Naive thymus-derived CD8-positive, alpha-beta T cell (primary cell): ENCODE measurements at regions of chr9 and their contacts with region 1.

Region 1: GRCh38 chr9:21802195-21803000 is at the start of gene MTAP:
- DNase-seq: peak; percentile 44 to 81 (median 64)
- ATAC-seq: peak; percentile 75 to 81
- H3K4me3 Mint-ChIP-seq: peak within 1 kb of the TSS; percentile 97 to 100 (median 98)
- H3K27ac Mint-ChIP-seq: peak within 1 kb of the TSS; percentile 86 to 100 (median 96)
- H3K4me1 Mint-ChIP-seq: peaks cover 26 to 52% (median 45%) of the 10 kb centered on the region in 4 donors
- H3K27me3 Mint-ChIP-seq: peaks cover 0 to 9% (median 2%) of the 10 kb centered on the region in 5 donors
- polyA plus RNA-seq, gene MTAP: 11.2 to 20.2 (median 14.2) TPM

Region 2: DNA sequence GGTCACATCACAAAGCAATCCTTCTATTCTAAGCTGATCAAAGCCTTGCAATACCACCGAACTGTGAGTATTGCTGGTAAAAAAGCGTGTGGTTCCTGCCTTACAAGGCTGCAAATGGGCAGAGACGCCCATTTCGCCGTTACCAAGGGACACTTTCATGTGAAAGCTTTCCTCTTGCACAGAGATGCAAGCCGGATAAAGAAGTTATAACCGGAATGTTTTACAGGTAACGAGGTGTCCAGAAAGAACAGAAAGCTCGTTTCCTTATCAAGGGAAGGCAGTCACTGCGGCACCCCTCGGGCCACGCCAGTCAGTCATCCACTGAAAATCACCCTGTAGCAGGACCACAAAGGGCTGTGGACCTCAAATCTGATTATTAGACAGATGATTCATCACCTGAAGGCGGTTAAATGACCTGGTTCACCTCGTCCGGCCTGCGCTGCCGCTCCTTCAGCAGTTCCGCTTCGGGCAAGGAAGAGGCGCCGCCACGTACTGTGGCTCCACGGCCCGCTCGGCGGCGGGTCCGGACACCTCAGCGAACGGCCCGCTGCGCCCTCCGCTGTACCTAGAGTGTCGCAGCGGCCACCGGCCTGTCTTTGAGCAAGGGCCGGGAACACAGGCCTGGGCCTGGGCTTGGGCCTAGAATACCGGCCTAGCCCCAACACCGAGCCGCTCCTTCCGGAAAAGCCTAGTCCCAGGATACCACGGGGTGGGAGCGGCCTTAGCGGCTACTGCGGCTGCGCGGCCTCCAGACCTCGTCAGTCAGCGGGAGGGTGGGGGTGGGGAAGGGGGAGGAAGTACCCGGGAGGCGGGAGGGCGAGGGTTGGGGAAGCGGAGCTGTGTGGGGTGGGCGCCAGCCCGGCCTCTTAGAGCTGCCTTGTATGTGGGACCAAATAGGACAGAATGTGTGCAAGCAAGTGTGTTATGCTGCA is 467.4 kb before region 1 on chr9 and contains the start of gene KLHL9:
- POLR2A ChIA-PET with region 1: interaction called, 13 read pairs
- DNase-seq: peak; percentile 78 to 93 (median 84)
- ATAC-seq: peak; percentile 84 to 85
- H3K4me3 Mint-ChIP-seq: peak within 1 kb of the TSS; percentile 88 to 98 (median 94)
- H3K27ac Mint-ChIP-seq: peak within 1 kb of the TSS; percentile 92 to 98 (median 96)
- H3K4me1 Mint-ChIP-seq: peaks cover 11 to 58% (median 44%) of the 10 kb centered on the region in 4 donors
- H3K27me3 Mint-ChIP-seq: peaks cover 0 to 2% (median 0%) of the 10 kb centered on the region in 5 donors
- polyA plus RNA-seq, gene KLHL9: 14.8 to 19.6 (median 18.6) TPM